Calu3 (cell line): ENCODE measurements at regions of chr20 and their contacts with region 1.

Region 1: DNA sequence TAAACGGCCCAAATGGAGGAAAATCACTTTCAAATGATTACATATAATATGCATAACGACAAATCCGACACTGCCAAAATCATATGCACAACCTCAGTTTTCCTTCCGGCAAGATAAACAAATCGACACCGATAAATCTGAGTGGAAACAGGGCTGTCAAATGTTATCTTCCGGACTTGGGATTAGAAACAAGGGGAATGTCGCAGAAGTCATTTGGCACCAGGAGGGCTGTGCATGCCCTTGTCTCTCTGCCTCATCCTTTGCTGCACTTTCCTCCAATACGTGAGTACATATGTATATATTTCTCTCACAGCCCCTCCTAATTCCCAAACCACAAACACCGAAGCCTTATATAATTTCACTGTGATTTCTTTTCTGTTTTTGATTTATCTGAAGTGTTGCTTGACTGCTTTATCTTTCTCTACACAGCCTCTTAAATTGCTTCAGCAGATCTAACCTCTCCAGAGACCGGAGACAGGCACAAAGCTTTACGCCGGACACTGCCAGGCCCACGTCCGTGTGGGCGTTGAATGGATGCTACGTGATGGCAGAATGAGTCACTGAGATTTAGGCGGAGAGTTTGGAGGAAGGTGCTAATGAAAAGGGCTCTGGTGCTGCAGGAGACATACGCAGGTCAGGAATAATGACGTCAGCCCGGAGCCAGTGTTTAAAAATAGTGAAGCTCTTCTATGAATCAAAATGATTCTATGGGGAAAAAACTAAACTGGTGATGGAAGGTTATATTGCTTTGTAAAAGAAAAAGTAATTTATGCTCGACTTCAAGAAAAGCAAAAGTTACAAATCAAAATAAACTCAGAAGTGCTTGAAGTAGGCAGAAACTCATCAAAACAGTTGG is 21.0 kb upstream of the PRELID3B start:
- DNase-seq: peak; percentile 36
- H3K4me3 Mint-ChIP-seq: peak overlapping the region; percentile 35
- H3K27ac Mint-ChIP-seq: no peak overlapping the region
- H3K4me1 Mint-ChIP-seq: peaks cover 12% of the 10 kb centered on the region
- H3K27me3 Mint-ChIP-seq: peaks cover 60% of the 10 kb centered on the region
- CTCF ChIP-seq: no peak

Region 2: GRCh38 chr20:58293453-58293852 is 770.1 kb before region 1 on chr20:
- CTCF ChIA-PET with region 1: no interaction called
- intact Hi-C with region 1: no loop called
- DNase-seq: no peak
- H3K4me3 Mint-ChIP-seq: no peak overlapping the region
- H3K27ac Mint-ChIP-seq: no peak overlapping the region
- H3K4me1 Mint-ChIP-seq: no peaks in the 10 kb centered on the region
- H3K27me3 Mint-ChIP-seq: no peaks in the 10 kb centered on the region
- CTCF ChIP-seq: no peak

Region 3: GRCh38 chr20:59074445-59074844 is 10.9 kb after region 1 on chr20:
- CTCF ChIA-PET with region 1: no interaction called
- intact Hi-C with region 1: loop called (anchors 1 kb)
- DNase-seq: no peak
- H3K4me3 Mint-ChIP-seq: no peak overlapping the region
- H3K27ac Mint-ChIP-seq: no peak overlapping the region
- H3K4me1 Mint-ChIP-seq: no peaks in the 10 kb centered on the region
- H3K27me3 Mint-ChIP-seq: peaks cover 99% of the 10 kb centered on the region
- CTCF ChIP-seq: no peak